Dendritic cell treated with granulocyte-macrophage colony-stimulating factor and Interleukin-4, amounts not matched to agents 40 ng/mL and 50 ng/mL, for 4 days (primary cell): ENCODE measurements at regions of chr17 and their contacts with region 1.

Region 1: GRCh38 chr17:36017799-36018198 is at the start of gene CCL23:
- H3K4me3 Mint-ChIP-seq: peak within 1 kb of the TSS; percentile 80
- H3K27ac Mint-ChIP-seq: peak within 1 kb of the TSS; percentile 87
- H3K4me1 Mint-ChIP-seq: peaks cover 71% of the 10 kb centered on the region
- H3K27me3 Mint-ChIP-seq: peaks cover 1% of the 10 kb centered on the region

Region 2: GRCh38 chr17:35713069-35713728 is 304.6 kb before region 1 on chr17:
- intact Hi-C with region 1: no loop called
- H3K4me3 Mint-ChIP-seq: no peak overlapping the region
- H3K27ac Mint-ChIP-seq: no peak overlapping the region
- H3K4me1 Mint-ChIP-seq: no peaks in the 10 kb centered on the region
- H3K27me3 Mint-ChIP-seq: no peaks in the 10 kb centered on the region

Region 3: DNA sequence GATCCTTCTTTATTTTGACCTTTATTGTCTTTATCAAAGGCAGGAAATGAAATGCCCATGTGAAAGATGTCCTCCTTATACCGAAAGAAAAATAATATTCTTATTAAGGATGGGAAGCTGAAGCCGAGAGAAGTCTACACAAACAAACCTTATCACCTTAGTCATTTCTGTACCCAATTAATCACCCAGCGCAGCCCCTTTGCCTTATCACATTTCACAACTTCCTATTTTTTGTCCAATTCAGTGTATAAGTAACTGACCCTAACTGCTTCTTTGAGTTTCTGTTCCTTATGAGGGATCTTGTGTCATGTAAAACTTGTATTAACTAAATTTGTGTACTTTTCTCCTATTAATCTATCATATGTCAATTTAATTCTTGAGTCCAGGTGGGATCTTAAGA is 16.3 kb after region 1 on chr17:
- intact Hi-C with region 1: loop called (anchors 2 kb)
- H3K4me3 Mint-ChIP-seq: no peak overlapping the region
- H3K27ac Mint-ChIP-seq: peak overlapping the region; percentile 76
- H3K4me1 Mint-ChIP-seq: peaks cover 71% of the 10 kb centered on the region
- H3K27me3 Mint-ChIP-seq: peaks cover 3% of the 10 kb centered on the region

Region 4: DNA sequence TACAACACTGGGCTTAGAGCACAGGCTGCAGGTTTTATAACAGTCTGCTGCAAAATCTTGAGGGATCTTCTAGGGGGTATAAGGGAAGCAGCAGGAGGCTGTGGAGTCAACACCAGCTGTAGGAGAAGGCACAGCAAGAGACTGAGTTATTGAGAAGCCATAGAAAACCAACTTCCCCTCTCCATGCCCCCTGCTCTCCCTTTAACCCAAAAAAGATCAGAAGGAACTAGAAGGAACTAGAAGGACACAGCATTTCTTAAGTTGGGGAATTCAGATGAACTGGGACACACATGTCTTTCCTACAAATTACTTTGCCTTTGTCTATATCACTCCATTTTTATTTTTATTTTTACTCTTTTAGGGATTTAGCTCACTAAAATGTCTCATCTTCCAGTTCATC is 40.1 kb after region 1 on chr17:
- intact Hi-C with region 1: loop called (anchors 5 kb)
- H3K4me3 Mint-ChIP-seq: peak overlapping the region; percentile 52
- H3K27ac Mint-ChIP-seq: peak overlapping the region; percentile 94
- H3K4me1 Mint-ChIP-seq: peaks cover 75% of the 10 kb centered on the region
- H3K27me3 Mint-ChIP-seq: no peaks in the 10 kb centered on the region

Region 5: DNA sequence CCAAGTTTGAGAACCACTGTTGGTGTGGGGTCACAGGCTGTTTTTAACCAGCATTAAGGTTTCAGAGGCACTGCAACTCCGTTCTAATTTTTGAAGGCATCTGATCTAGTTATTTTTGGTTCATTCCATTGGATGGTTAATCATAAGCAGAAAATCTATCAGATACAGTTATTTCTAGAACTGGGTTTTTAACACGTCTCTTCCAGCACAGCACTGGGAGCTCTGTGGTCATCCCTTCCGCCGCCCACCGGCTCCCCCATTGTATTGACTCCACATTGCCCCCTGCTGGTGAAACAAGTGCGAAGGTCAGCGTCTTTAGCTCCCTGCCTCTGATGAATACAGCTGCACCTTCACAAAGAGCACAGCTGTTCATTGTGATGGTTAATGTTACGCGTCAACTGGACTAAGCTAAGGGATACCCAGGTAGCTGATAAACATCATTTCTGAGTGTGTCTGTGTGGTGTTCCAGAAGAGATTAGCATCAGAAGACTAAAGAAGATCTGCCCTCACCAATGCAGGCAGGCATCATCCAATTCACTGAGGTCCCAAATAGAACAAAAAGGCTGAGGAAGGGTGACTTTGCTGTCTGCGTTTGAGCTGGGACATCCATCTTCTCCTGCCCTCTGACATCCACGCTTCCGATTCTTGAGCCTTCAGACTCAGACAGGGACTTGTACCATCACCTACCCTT is 54.8 kb after region 1 on chr17:
- intact Hi-C with region 1: loop called (anchors 5 kb)
- H3K4me3 Mint-ChIP-seq: peak overlapping the region; percentile 17
- H3K27ac Mint-ChIP-seq: peak overlapping the region; percentile 74
- H3K4me1 Mint-ChIP-seq: peaks cover 42% of the 10 kb centered on the region
- H3K27me3 Mint-ChIP-seq: no peaks in the 10 kb centered on the region

Region 6: GRCh38 chr17:36089888-36090836 is 72.4 kb after region 1 on chr17 and contains the start of gene CCL3:
- intact Hi-C with region 1: no loop called
- H3K4me3 Mint-ChIP-seq: peak within 1 kb of the TSS; percentile 71
- H3K27ac Mint-ChIP-seq: peak within 1 kb of the TSS; percentile 92
- H3K4me1 Mint-ChIP-seq: peaks cover 45% of the 10 kb centered on the region
- H3K27me3 Mint-ChIP-seq: no peaks in the 10 kb centered on the region